Mammary epithelial cell (primary cell): ENCODE measurements at regions of chr16 and their contacts with region 1.

Region 1: DNA sequence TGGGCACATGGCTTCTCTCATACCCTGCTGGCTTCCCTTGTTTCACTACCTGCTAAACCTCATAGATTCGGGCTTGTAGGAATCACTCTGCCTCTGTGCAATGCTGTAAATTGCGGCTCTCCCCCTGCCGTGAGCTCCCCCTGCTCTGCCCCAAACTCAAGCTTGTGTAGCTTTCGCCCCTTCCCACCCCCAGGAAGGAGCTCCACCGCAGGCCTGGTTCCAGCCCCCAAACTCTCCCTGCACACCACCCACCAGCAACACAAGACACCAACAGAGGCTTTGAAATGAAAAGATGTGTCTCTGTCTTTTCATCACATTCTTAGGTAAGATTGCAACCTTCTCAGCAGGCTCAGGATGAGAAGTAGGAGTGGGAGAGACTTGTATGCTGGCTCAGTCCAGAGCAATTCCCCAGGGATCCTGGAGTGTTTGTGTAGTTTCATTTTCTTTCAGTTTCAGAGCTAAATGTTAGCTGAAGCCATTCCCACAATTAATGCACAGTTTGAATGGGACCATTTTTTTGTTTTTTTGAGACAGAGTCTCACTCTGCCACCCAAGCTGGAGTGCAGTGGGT is 14.2 kb downstream of the CX3CL1 start:
- DNase-seq: no peak
- H3K4me3 ChIP-seq: no peak overlapping the region
- H3K27ac ChIP-seq: no peak overlapping the region
- H3K4me1 ChIP-seq: peaks cover 7% of the 10 kb centered on the region
- H3K27me3 ChIP-seq: no peaks in the 10 kb centered on the region
- CTCF ChIP-seq: no peak

Region 2: DNA sequence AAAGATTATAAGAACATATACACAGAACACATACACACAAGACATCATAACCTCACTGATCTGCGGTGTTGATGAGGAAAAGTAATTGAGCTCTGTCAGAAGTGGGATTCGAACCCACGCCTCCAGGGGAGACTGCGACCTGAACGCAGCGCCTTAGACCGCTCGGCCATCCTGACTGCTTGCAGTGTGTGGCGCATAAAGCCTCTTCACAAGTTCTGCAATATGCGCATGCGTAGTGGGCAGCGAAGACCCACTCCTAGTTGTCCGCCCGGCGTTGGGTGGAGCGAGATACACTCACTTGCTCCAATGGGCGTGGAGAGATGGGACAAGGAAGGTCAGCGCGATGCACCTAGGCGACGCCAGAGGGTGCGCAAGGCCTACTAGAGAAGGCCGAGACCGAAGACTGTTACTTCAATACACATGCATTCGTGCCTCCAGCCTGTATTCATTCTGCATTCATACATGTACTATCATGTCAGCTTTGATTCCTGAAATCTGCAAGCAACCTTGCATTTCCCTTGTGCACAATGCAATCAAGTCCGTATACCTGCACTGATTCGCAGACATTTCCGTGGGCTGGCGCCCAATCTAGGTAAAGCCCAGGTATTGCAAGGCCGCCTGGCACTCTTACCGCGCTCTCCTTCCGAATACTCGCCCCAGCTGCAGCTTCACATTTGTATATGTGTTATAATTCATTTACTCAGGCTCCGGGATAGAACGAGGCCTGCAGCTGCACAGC is 85.9 kb before region 1 on chr16:
- CTCF ChIA-PET with region 1: no interaction called
- dilution Hi-C with region 1: no loop called
- in situ Hi-C with region 1: no loop called
- intact Hi-C with region 1: no loop called
- DNase-seq: peak; percentile 97
- H3K4me3 ChIP-seq: peak overlapping the region; percentile 25 to 47 (median 40)
- H3K27ac ChIP-seq: no peak overlapping the region
- H3K4me1 ChIP-seq: peaks cover 10% of the 10 kb centered on the region
- H3K27me3 ChIP-seq: no peaks in the 10 kb centered on the region
- CTCF ChIP-seq: peak; percentile 97 to 99

Region 3: GRCh38 chr16:57432989-57433388 is 46.5 kb after region 1 on chr16:
- CTCF ChIA-PET with region 1: no interaction called
- dilution Hi-C with region 1: loop called (anchors 5 kb)
- in situ Hi-C with region 1: no loop called
- intact Hi-C with region 1: no loop called
- DNase-seq: no peak
- H3K4me3 ChIP-seq: no peak overlapping the region
- H3K27ac ChIP-seq: no peak overlapping the region
- H3K4me1 ChIP-seq: no peaks in the 10 kb centered on the region
- H3K27me3 ChIP-seq: no peaks in the 10 kb centered on the region
- CTCF ChIP-seq: no peak

Region 4: DNA sequence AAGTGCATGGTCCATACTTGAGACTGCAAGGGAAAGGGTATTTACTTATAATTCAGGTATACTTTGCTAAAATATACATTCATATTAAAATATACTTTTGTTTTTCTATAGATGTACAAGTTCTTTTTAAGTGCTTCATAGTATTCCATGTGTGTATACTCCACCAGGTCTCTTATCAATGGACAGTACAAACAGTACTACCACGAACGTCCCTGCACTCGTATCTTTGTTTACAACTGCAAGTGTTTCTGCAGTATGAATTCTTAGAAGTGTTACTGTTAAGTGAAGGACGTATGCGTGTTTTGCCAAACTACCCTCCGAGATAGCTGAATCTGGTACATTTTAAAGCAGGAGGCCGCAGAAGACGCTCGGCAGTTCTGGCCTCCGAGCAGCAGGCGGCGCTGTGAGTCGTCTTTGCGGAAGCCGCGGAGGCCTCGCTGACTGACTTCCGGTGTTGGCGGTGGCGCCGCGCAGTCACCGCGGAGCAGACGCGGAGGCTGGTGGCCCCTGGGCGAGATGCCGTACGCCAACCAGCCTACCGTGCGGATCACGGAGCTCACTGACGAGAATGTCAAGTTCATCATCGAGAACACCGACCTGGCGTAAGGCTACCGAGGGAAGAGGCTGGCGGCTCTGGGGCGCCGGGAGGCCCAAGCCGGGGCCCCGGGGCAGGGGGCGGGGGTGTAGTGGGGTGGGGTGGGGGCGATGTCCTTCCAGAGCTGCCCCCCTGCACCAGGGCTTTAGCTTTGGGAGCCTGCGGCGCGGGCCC is 75.9 kb after region 1 on chr16 and contains the start of gene POLR2C:
- CTCF ChIA-PET with region 1: no interaction called
- dilution Hi-C with region 1: loop called (anchors 5 kb)
- in situ Hi-C with region 1: no loop called
- intact Hi-C with region 1: no loop called
- DNase-seq: peak; percentile 75
- H3K4me3 ChIP-seq: peak within 1 kb of the TSS; percentile 55 to 94 (median 88)
- H3K27ac ChIP-seq: peak within 1 kb of the TSS; percentile 35
- H3K4me1 ChIP-seq: peaks cover 5% of the 10 kb centered on the region
- H3K27me3 ChIP-seq: no peaks in the 10 kb centered on the region
- CTCF ChIP-seq: peak; percentile 84 to 89
- total RNA-seq, gene POLR2C: 45.1 to 82.2 TPM